ENCODE measurements at regions of chr19 and their contacts with region 1.

Region 1: DNA sequence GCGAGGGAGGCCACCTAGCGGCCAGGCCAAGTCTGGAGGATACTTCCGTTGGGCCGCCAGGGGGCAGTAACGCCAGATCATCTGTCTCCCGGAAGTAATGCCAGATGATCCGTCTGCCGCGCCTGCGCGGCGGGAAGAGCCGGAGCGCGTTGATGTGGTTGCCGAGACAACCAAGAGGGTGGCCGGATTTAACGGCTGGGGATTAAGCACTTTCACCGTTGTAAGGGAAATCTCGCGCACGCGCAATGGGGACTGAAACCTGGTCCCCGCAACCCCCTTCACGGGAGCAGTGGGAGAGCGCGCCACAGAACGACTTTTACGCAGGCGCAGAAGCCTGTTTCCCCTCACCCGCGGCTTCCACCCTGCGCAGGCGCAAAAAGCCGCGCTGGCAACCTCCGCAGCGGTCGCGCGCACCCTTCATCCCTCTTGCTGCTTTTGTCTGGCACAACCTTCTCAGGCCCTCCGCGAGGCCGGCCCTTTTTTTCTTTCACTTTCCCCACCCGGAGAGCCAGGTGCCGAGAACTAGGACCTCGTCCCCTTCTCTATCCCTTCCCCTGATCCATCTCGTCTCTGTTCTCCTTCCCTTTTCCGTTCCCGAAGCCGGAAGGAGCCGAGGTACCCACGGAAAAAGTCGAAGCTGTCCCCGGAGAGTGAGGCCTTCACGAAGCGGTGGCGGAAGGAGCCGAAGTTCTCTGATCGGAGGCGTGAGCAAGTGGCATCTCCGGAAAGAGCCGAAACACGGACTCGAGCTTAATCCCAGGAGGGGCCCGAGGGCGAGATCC is 886 bp upstream of the U2AF2 start:
- DNase-seq: peak; percentile 99
- H3K4me3 ChIP-seq: peak overlapping the region; percentile 64 to 93 (median 79)
- H3K27ac ChIP-seq: peak overlapping the region; percentile 93 to 100 (median 99)
- H3K4me1 ChIP-seq: peaks cover 34 to 49% (median 41%) of the 10 kb centered on the region in 4 donors
- H3K27me3 ChIP-seq: no peaks in the 10 kb centered on the region
- CTCF ChIP-seq: peak; percentile 97 to 100 (median 99)
- EP300 ChIP-seq: no peak
- POLR2A ChIP-seq: peak; percentile 92

Region 2: DNA sequence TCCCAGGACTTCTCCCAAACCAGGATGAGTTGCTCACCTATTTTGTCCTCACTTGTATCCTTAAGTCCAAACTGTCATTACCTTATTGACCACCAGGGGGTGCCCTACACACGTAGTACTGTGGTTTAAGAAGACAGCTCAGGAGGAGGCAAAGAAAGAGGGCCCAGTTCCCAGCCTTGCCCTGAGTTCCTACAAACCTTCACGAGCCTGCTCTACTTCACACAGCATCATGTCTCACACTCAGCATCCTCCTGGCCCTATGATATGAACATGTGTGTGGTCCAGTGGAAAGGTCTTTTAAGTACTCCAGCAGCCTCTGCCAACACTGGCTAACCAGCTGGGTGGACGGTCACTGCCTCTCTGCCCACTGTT is 21.5 kb before region 1 on chr19:
- in situ Hi-C with region 1: no loop called
- intact Hi-C with region 1: loop called (anchors 2 kb)
- DNase-seq: peak; percentile 94
- H3K4me3 ChIP-seq: no peak overlapping the region
- H3K27ac ChIP-seq: peak overlapping the region; percentile 16 to 97 (median 56)
- H3K4me1 ChIP-seq: peaks cover 15 to 33% (median 20%) of the 10 kb centered on the region in 4 donors
- H3K27me3 ChIP-seq: no peaks in the 10 kb centered on the region
- CTCF ChIP-seq: peak; percentile 85 to 96 (median 90)
- EP300 ChIP-seq: no peak
- POLR2A ChIP-seq: no peak

Measured in transverse colon (tissue), 4 donors.